B cell (primary cell): ENCODE measurements at regions of chr9 and their contacts with region 1.

Region 1: DNA sequence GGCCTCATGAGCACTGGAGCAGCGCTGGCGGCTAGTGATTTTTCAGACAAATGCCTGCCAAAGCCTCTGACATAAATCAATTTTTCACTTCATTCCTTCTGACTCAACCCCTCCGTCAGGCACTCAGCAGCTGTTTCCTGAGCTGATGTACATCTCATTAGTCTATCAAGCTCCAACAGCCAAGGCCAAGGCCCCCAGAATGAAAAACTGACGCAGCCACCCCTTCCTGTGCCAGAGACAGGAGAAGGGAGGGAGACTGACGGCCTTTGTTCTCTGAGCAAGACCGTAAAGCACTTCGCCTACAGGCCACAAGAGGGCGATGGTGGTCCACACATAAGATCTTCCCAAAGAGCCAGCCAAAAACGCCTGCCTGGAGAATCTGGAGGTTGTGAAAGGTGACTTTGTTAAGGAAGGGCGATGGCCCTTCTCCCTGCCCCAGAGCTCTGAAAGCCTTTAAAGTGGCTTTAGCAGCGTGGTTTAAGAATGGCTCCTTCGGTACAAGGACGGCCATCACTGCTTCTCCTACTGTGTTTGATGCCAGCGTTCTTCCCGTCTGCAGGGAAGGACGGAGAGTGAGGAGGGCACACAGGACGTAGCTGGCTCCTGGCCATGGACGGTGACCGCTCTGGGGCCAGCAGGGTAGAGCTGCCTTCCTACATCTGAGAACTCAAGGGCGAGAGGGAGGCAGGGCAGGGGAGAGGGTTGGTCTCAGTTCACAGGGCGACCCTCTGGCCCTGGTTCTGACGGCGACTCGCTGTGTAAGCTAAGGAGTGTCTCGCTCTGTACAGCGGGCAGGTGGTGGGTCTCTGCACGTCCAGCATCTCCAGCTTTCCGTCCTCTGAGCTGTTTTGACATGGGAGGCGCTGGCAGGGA is 37.0 kb downstream of the ALG2 start:
- DNase-seq: peak; percentile 89
- ATAC-seq: peak; percentile 86
- H3K4me3 ChIP-seq: peak overlapping the region in 3 of 5 experiments; percentile 6 to 36 (median 29)
- H3K4me3 Mint-ChIP-seq: peak overlapping the region; percentile 62
- H3K27ac ChIP-seq: peak overlapping the region in 1 of 2 donors; percentile 3
- H3K27ac Mint-ChIP-seq: peak overlapping the region; percentile 84
- H3K4me1 ChIP-seq: peaks cover 49 to 65% of the 10 kb centered on the region in 2 donors
- H3K4me1 Mint-ChIP-seq: peaks cover 92% of the 10 kb centered on the region
- H3K27me3 ChIP-seq: no peaks in the 10 kb centered on the region
- H3K27me3 Mint-ChIP-seq: no peaks in the 10 kb centered on the region
- CTCF ChIP-seq: peak; percentile 99

Region 2: GRCh38 chr9:97848582-97849237 is 1336.0 kb before region 1 on chr9:
- CTCF ChIA-PET with region 1: no interaction called
- POLR2A ChIA-PET with region 1: no interaction called
- intact Hi-C with region 1: no loop called
- DNase-seq: peak; percentile 66
- ATAC-seq: peak; percentile 29
- H3K4me3 ChIP-seq: peak overlapping the region; percentile 31 to 56 (median 51)
- H3K4me3 Mint-ChIP-seq: peak overlapping the region; percentile 82
- H3K27ac ChIP-seq: no peak overlapping the region
- H3K27ac Mint-ChIP-seq: no peak overlapping the region
- H3K4me1 ChIP-seq: peaks cover 29 to 35% of the 10 kb centered on the region in 2 donors
- H3K4me1 Mint-ChIP-seq: peaks cover 20% of the 10 kb centered on the region
- H3K27me3 ChIP-seq: peaks cover 0 to 82% (median 58%) of the 10 kb centered on the region in 4 experiments
- H3K27me3 Mint-ChIP-seq: peaks cover 63% of the 10 kb centered on the region
- CTCF ChIP-seq: no peak

Region 3: GRCh38 chr9:99173570-99174504 is 10.9 kb before region 1 on chr9:
- CTCF ChIA-PET with region 1: interaction called, 185 read pairs
- POLR2A ChIA-PET with region 1: interaction called, 5 read pairs
- intact Hi-C with region 1: no loop called
- DNase-seq: no peak
- ATAC-seq: no peak
- H3K4me3 ChIP-seq: no peak overlapping the region
- H3K4me3 Mint-ChIP-seq: no peak overlapping the region
- H3K27ac ChIP-seq: no peak overlapping the region
- H3K27ac Mint-ChIP-seq: no peak overlapping the region
- H3K4me1 ChIP-seq: peaks cover 3 to 7% of the 10 kb centered on the region in 2 donors
- H3K4me1 Mint-ChIP-seq: peaks cover 29% of the 10 kb centered on the region
- H3K27me3 ChIP-seq: no peaks in the 10 kb centered on the region
- H3K27me3 Mint-ChIP-seq: no peaks in the 10 kb centered on the region
- CTCF ChIP-seq: no peak

Region 4: DNA sequence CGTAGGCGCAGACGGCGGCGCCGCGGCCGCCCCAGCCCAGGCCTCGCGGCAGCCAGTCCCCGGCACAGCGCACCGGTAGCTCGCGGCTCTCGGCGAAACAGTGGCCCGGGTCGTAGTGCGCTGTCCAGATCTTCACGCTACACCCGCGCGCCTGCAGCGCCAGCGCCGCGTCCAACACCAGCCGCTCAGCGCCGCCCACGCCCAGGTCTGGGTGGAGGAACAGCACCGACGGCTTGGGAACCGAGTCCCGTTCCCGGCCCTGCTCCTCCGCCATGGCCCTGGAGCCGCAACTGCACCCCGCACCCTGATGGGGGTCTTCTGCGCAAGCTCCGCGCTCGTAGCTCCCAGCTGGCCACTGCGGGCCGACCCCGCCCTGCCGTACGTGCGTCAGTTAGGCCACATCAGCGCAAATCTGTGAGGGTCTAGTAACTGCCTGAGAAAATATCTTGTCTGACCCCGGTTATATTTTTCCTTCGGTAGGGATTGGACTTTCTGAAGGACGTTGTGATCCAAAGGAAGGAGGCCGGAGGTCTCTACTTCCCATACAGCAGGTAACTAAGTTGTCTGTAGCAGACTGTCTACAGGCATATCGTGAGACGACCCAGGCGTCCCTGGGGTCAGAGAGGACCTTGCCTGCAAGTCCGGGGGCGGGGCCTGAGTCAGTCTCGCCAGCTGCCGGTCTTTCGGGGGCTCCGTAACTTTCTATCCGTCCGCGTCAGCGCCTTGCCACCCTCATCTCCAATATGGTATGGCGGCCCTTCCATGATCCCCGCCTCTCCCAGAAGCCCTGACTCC is 37.1 kb after region 1 on chr9 and contains the starts of genes ALG2 and SEC61B:
- CTCF ChIA-PET with region 1: interaction called, 39 read pairs
- POLR2A ChIA-PET with region 1: interaction called, 6 read pairs
- intact Hi-C with region 1: loop called (anchors 1 kb)
- DNase-seq: peak; percentile 98
- ATAC-seq: peak; percentile 89
- H3K4me3 ChIP-seq: peak within 1 kb of the TSS; percentile 88 to 96 (median 90)
- H3K4me3 Mint-ChIP-seq: peak within 1 kb of the TSS; percentile 95
- H3K27ac ChIP-seq: peak within 1 kb of the TSS; percentile 98 to 99
- H3K27ac Mint-ChIP-seq: peak within 1 kb of the TSS; percentile 100
- H3K4me1 ChIP-seq: peaks cover 30 to 43% of the 10 kb centered on the region in 2 donors
- H3K4me1 Mint-ChIP-seq: peaks cover 77% of the 10 kb centered on the region
- H3K27me3 ChIP-seq: no peaks in the 10 kb centered on the region
- H3K27me3 Mint-ChIP-seq: no peaks in the 10 kb centered on the region
- CTCF ChIP-seq: no peak
- total RNA-seq, gene ALG2: 42.6 and 46.3 TPM in 2 replicates
- total RNA-seq, gene SEC61B: 70.2 and 78.2 TPM in 2 replicates

Region 5: DNA sequence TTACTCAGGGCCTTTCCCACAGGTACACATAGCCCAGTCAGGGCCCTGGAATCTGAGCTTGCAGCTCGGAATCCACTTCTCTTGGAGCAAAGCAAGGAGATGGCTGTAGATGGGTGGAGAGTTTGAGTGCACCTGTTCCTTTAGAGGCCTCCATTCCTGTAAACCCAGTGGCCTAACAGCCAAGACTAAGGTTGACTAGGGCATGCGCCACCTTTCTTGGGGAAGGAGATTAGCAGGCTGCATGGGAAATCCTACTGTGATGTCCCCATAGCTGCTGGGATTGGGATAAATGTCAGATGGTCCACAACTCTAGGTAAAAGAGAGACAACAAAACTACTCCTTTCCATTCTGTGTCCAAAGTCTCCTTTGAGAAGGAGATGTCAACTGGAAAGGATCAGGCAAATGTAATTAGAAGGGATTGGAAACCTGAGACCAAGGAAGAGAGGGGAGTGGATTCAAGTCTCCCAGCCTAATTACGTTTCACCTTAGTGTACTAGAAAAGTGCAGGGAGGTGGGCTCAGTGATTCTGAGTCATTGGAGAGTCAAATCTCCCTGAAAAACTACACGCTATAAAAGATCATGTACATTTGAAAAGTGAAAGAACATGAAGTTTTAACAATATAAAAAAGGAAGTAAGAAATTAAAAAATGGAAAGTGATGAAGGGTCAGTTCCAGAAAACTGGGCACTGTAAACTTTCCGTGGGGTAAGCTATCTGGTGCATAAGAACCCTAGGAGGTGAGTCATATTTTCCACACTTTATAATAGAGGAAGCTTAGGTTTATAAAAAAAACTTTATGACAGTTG is 141.6 kb after region 1 on chr9:
- CTCF ChIA-PET with region 1: no interaction called
- POLR2A ChIA-PET with region 1: no interaction called
- intact Hi-C with region 1: no loop called
- DNase-seq: no peak
- ATAC-seq: peak; percentile 49
- H3K4me3 ChIP-seq: no peak overlapping the region
- H3K4me3 Mint-ChIP-seq: no peak overlapping the region
- H3K27ac ChIP-seq: no peak overlapping the region
- H3K27ac Mint-ChIP-seq: no peak overlapping the region
- H3K4me1 ChIP-seq: no peaks in the 10 kb centered on the region
- H3K4me1 Mint-ChIP-seq: peaks cover 7% of the 10 kb centered on the region
- H3K27me3 ChIP-seq: peaks cover 0 to 4% (median 1%) of the 10 kb centered on the region in 4 experiments
- H3K27me3 Mint-ChIP-seq: peaks cover 14% of the 10 kb centered on the region
- CTCF ChIP-seq: no peak

Region 6: DNA sequence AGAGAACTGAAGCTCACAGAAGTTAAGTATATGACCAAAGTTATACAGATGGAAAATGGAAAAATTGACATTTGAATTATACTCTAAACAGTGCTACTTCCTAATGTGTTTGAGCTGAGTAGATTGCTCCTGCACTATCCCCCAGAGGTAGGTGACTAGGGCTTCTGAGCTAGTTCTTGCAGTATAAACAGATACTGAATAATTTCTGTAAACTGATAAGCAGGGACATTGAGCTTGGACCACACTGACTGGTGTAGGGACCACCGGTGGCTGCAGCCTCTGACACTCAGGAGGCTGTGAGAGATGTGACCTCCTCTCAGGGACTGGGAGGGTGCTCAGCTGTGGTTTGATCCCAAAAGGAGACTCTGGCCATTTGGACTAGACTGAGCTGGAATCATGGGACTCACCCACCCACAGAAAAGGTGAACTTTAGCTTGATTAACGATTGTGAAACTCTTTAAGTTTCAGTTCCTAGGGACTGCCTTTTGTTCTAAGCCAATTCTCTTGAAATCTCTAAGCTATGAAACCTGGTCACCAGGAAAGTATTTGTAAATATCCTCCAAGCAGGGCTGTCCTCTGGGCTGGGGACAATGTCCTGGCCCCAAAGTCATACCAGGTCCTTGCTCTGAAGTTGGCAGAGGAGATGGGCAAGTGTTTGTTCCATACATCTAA is 328.9 kb after region 1 on chr9:
- CTCF ChIA-PET with region 1: interaction called, 3 read pairs
- POLR2A ChIA-PET with region 1: no interaction called
- intact Hi-C with region 1: loop called (anchors 10 kb)
- DNase-seq: peak; percentile 40
- ATAC-seq: peak; percentile 37
- H3K4me3 ChIP-seq: no peak overlapping the region
- H3K4me3 Mint-ChIP-seq: peak overlapping the region; percentile 58
- H3K27ac ChIP-seq: peak overlapping the region; percentile 45 to 57
- H3K27ac Mint-ChIP-seq: peak overlapping the region; percentile 88
- H3K4me1 ChIP-seq: peaks cover 71% of the 10 kb centered on the region in 2 donors
- H3K4me1 Mint-ChIP-seq: peaks cover 77% of the 10 kb centered on the region
- H3K27me3 ChIP-seq: no peaks in the 10 kb centered on the region
- H3K27me3 Mint-ChIP-seq: no peaks in the 10 kb centered on the region
- CTCF ChIP-seq: no peak

Region 7: DNA sequence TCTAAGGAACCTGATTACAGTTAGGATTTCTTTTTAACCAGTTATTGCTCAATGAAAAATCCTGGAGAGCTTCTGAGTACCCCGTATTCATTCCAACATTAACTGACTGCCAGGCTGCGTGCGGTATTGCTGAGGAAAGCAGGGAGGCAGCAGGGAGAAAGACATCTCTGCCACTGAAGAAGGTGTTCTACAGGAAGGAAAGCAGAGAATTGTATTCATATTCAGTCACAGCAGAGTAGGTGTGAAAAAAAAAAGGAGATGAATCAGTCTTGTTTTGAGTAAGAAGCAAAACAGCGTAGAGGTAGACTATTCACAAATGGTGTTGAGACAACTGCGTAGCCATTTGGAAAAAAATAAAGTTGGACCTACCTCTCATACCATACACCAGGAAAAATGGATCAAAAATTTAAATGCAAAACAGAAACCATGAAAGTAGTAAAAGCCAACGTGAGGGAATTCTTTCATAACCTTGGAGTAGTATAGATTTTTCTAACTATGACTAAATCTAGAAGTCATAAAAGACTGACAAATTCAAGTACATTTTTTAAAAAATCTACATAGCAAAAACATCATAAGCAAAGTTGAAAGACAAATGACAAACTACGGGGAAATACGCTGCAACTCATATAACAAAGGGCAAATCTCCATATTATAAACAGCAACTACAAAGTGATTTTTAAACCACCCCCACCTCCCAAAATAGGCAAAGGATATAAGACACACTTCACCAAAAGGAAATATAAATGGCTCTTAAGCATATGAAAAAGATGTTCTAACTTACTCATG is 627.1 kb after region 1 on chr9:
- CTCF ChIA-PET with region 1: interaction called, 11 read pairs
- POLR2A ChIA-PET with region 1: no interaction called
- intact Hi-C with region 1: no loop called
- DNase-seq: no peak
- ATAC-seq: no peak
- H3K4me3 ChIP-seq: no peak overlapping the region
- H3K4me3 Mint-ChIP-seq: no peak overlapping the region
- H3K27ac ChIP-seq: no peak overlapping the region
- H3K27ac Mint-ChIP-seq: no peak overlapping the region
- H3K4me1 ChIP-seq: no peaks in the 10 kb centered on the region
- H3K4me1 Mint-ChIP-seq: peaks cover 28% of the 10 kb centered on the region
- H3K27me3 ChIP-seq: no peaks in the 10 kb centered on the region
- H3K27me3 Mint-ChIP-seq: no peaks in the 10 kb centered on the region
- CTCF ChIP-seq: no peak

Region 8: DNA sequence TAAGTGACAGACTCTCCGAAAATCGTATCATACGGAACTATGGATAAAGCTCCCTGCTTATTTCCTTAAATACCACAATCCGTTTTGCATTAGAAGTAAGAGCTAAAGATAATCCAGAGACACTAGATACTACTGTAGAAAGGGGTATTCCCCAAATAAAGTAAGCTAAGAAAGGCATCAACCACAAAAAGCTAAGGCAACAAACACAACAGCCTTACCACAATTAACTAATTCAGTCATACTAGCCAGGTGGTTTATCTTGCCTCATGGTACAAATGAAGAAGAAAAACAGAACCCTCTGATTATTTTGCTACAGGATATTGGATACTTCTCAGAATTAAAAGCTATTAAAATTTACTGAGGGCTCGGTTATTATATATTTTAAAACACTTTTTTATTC is 900.0 kb after region 1 on chr9:
- CTCF ChIA-PET with region 1: no interaction called
- POLR2A ChIA-PET with region 1: no interaction called
- intact Hi-C with region 1: loop called (anchors 10 kb)
- DNase-seq: peak; percentile 76
- ATAC-seq: peak; percentile 68
- H3K4me3 ChIP-seq: peak overlapping the region in 3 of 5 experiments; percentile 55 to 68 (median 58)
- H3K4me3 Mint-ChIP-seq: peak overlapping the region; percentile 73
- H3K27ac ChIP-seq: peak overlapping the region; percentile 80 to 86
- H3K27ac Mint-ChIP-seq: peak overlapping the region; percentile 79
- H3K4me1 ChIP-seq: peaks cover 46 to 70% of the 10 kb centered on the region in 2 donors
- H3K4me1 Mint-ChIP-seq: peaks cover 78% of the 10 kb centered on the region
- H3K27me3 ChIP-seq: no peaks in the 10 kb centered on the region
- H3K27me3 Mint-ChIP-seq: no peaks in the 10 kb centered on the region
- CTCF ChIP-seq: no peak